Activated T-helper 1 cell treated with anti-CD3 and anti-CD28 coated beads, Interleukin-12 subunit alpha, Interleukin-12 subunit beta, Interleukin-2, Interleukin-4 antibody, amounts not matched to agents 30 ng/mL and 10 ng/mL and 1 ng/mL, durations not matched to agents 14 hours and 24 hours and 36 hours (primary cell): ENCODE measurements at regions of chrX and their contacts with region 1.

Region 1: DNA sequence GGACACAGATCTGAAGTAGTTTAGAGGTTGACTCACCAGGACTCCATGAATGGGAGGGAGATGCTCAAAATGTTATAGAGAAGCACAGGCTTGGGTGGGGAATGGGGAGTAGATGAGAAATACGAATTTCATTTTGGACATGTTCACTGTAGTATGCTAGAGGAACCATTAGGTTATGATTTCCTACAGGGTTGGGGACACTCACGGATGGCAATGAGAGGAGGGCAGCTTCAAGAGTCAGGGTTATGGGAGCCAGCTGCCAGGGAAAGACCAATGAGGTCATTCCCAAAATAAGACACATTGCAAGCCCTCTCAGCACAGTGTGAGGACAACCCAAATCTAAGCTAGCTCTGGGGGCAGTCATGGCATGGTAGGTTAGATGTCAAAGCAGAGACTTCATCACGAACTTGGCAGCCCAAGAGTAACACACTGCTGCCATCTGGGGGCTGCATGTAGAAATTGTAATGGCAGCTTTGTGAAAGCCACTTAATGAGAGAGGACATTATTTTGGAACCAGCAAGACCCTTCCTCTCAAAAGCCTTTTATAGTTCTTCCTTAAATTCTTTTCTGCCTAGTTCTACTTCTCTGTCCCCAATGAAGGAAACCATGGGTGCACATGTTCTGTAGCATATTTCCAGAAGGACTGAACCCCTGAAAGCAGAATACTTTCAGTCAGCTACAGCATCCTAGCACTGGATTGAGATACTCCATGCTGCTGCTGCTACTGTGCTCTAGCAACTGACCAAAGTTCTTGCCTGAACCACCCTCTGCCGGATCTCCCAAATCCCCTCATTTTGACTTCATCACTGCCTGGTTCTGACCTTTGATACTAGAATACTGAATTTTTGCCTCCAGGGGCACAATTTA is 16.2 kb upstream of the ZCCHC12 start:
- DNase-seq: no peak
- H3K4me3 Mint-ChIP-seq: no peak overlapping the region
- H3K27ac Mint-ChIP-seq: no peak overlapping the region
- H3K4me1 Mint-ChIP-seq: no peaks in the 10 kb centered on the region
- H3K27me3 Mint-ChIP-seq: peaks cover 11% of the 10 kb centered on the region

Region 2: GRCh38 chrX:118627084-118627758 is 180.2 kb before region 1 on chrX:
- intact Hi-C with region 1: loop called (anchors 1 kb)
- DNase-seq: no peak
- H3K4me3 Mint-ChIP-seq: no peak overlapping the region
- H3K27ac Mint-ChIP-seq: no peak overlapping the region
- H3K4me1 Mint-ChIP-seq: no peaks in the 10 kb centered on the region
- H3K27me3 Mint-ChIP-seq: no peaks in the 10 kb centered on the region

Region 3: GRCh38 chrX:118644378-118644777 is 163.0 kb before region 1 on chrX:
- intact Hi-C with region 1: loop called (anchors 5 kb)
- DNase-seq: no peak
- H3K4me3 Mint-ChIP-seq: no peak overlapping the region
- H3K27ac Mint-ChIP-seq: no peak overlapping the region
- H3K4me1 Mint-ChIP-seq: no peaks in the 10 kb centered on the region
- H3K27me3 Mint-ChIP-seq: no peaks in the 10 kb centered on the region

Region 4: DNA sequence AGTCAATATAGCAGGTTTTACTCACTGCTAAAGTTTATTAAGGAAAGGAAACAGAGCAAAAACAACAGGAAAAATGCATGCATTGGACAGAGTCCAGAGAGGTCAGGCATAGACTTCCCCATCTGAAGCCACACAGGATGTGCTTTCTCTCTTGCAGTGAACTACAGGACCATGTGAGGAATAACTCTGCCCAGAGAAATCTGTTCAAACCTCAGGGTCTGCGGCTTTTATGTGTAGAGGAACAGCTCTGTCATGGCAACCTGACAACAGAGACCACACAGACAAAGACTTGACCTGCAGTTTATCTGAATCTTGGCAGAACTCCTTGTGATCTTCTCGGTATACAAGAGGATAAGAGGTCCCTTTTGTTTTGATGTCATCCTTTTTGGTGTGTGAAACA is 120.8 kb after region 1 on chrX:
- intact Hi-C with region 1: no loop called
- DNase-seq: no peak
- H3K4me3 Mint-ChIP-seq: no peak overlapping the region
- H3K27ac Mint-ChIP-seq: no peak overlapping the region
- H3K4me1 Mint-ChIP-seq: no peaks in the 10 kb centered on the region
- H3K27me3 Mint-ChIP-seq: no peaks in the 10 kb centered on the region